Activated CD8-positive, alpha-beta memory T cell treated with anti-CD3 and anti-CD28 coated beads, Interleukin-2, amount 10 ng/mL, durations not matched to agents 7 days and 5 days (primary cell): ENCODE measurements at regions of chr5 and their contacts with region 1.

Region 1: DNA sequence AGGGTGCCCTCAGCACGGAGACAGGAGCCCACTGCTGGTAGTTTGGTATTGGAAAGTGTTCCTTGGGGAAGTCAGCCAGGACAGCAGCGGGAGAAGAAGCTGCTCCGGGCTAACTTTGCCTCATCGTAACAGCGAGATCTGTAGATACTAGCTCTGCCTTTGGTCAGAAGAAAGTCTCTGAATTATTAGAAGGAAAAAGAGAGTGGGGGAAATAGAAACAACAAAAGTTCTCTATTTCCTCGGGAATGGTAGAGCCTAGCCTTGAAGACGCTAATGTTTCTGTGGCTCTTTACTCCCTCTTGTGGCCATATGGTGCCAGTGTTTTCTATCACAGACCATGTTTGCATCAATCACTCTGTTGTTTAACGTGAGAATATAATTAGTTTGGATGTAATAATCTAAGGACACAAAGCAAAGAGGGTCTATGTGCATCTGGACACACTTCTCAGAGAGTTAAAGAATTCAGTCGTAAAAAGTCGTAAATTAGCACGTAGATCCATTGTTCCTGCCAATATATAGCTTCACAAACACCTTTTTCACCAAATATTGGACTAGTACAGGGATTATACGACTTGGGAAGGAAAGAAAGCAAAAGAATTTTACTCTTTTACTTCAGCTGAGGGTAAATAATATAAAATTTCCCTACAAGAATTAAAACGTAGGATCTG is 40.2 kb upstream of the HSD17B4 start:
- DNase-seq: peak; percentile 70
- ATAC-seq: peak; percentile 91
- H3K4me3 Mint-ChIP-seq: peak overlapping the region; percentile 76
- H3K27ac Mint-ChIP-seq: peak overlapping the region; percentile 50
- H3K4me1 Mint-ChIP-seq: peaks cover 31% of the 10 kb centered on the region
- H3K27me3 Mint-ChIP-seq: peaks cover 5% of the 10 kb centered on the region

Region 2: GRCh38 chr5:119022017-119022745 is 389.9 kb before region 1 on chr5:
- CTCF ChIA-PET with region 1: interaction called, 31 read pairs
- DNase-seq: no peak
- ATAC-seq: peak; percentile 60
- H3K4me3 Mint-ChIP-seq: no peak overlapping the region
- H3K27ac Mint-ChIP-seq: no peak overlapping the region
- H3K4me1 Mint-ChIP-seq: no peaks in the 10 kb centered on the region
- H3K27me3 Mint-ChIP-seq: no peaks in the 10 kb centered on the region

Region 3: GRCh38 chr5:119070828-119071572 is 341.1 kb before region 1 on chr5 and contains the start of gene DMXL1:
- CTCF ChIA-PET with region 1: interaction called, 17 read pairs
- DNase-seq: peak; percentile 99
- ATAC-seq: peak; percentile 89
- H3K4me3 Mint-ChIP-seq: peak within 1 kb of the TSS; percentile 95
- H3K27ac Mint-ChIP-seq: peak within 1 kb of the TSS; percentile 98
- H3K4me1 Mint-ChIP-seq: peaks cover 40% of the 10 kb centered on the region
- H3K27me3 Mint-ChIP-seq: no peaks in the 10 kb centered on the region
- total RNA-seq, gene DMXL1: 30.4 to 35.5 TPM

Region 4: GRCh38 chr5:119129770-119130169 is 282.3 kb before region 1 on chr5:
- CTCF ChIA-PET with region 1: no interaction called
- DNase-seq: no peak
- ATAC-seq: no peak
- H3K4me3 Mint-ChIP-seq: no peak overlapping the region
- H3K27ac Mint-ChIP-seq: no peak overlapping the region
- H3K4me1 Mint-ChIP-seq: no peaks in the 10 kb centered on the region
- H3K27me3 Mint-ChIP-seq: no peaks in the 10 kb centered on the region

Region 5: GRCh38 chr5:119328753-119329602 is 83.1 kb before region 1 on chr5:
- CTCF ChIA-PET with region 1: interaction called, 13 read pairs
- DNase-seq: peak; percentile 83
- ATAC-seq: peak; percentile 71
- H3K4me3 Mint-ChIP-seq: peak overlapping the region; percentile 47
- H3K27ac Mint-ChIP-seq: peak overlapping the region; percentile 92
- H3K4me1 Mint-ChIP-seq: peaks cover 89% of the 10 kb centered on the region
- H3K27me3 Mint-ChIP-seq: no peaks in the 10 kb centered on the region

Region 6: DNA sequence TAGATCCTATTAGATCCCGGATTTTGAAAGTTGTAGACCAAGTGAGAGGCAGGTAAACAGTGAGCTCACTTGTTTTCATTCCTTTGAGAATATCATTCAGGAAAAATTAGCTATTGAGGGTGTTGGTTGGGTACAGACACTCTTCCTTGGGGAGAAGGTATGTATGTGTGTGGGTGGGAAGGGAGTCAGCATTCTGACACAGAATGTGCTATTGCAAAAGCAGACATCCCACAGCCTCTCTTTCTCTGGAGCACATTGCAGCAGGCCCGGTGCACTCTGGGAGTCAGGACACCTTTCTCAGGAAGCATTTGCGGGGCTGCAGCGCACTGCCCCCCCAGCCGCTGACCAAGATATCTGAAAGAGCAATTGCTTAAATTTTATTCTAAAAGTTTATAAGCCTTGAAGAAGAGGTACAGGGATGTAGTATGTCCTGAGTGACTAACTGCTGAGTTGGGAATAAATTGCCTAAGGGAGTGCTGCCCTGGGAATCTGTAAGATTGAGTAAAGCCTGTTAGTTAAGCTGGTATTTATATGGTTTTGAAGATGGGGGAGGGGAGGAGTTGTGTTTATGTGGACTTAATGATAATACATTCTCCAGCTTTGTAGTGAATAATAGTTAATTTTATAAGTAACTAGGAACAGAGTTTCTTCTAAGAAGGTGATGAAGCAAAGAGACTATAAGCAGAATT is 51.0 kb before region 1 on chr5:
- CTCF ChIA-PET with region 1: interaction called, 10 read pairs
- DNase-seq: no peak
- ATAC-seq: no peak
- H3K4me3 Mint-ChIP-seq: no peak overlapping the region
- H3K27ac Mint-ChIP-seq: peak overlapping the region; percentile 66
- H3K4me1 Mint-ChIP-seq: peaks cover 93% of the 10 kb centered on the region
- H3K27me3 Mint-ChIP-seq: no peaks in the 10 kb centered on the region